Natural killer cell (primary cell): ENCODE measurements at regions of chr14 and their contacts with region 1.

Region 1: GRCh38 chr14:67426983-67427606 is 15.1 kb upstream of the PLEK2 start:
- DNase-seq: peak; percentile 65 to 89
- ATAC-seq: peak; percentile 87 to 99 (median 98)
- H3K4me3 ChIP-seq: no peak overlapping the region
- H3K4me3 Mint-ChIP-seq: no peak overlapping the region
- H3K27ac ChIP-seq: no peak overlapping the region
- H3K27ac Mint-ChIP-seq: no peak overlapping the region
- H3K4me1 ChIP-seq: peaks cover 6% of the 10 kb centered on the region
- H3K4me1 Mint-ChIP-seq: no peaks in the 10 kb centered on the region
- H3K27me3 ChIP-seq: no peaks in the 10 kb centered on the region
- H3K27me3 Mint-ChIP-seq: peaks cover 18 to 19% of the 10 kb centered on the region in 2 donors
- CTCF ChIP-seq: peak; percentile 90

Region 2: GRCh38 chr14:67571272-67571850 is 144.3 kb after region 1 on chr14:
- intact Hi-C with region 1: loop called (anchors 1 kb)
- DNase-seq: peak; percentile 63 to 85
- ATAC-seq: peak; percentile 68 to 97 (median 91)
- H3K4me3 ChIP-seq: no peak overlapping the region
- H3K4me3 Mint-ChIP-seq: no peak overlapping the region
- H3K27ac ChIP-seq: no peak overlapping the region
- H3K27ac Mint-ChIP-seq: no peak overlapping the region
- H3K4me1 ChIP-seq: no peaks in the 10 kb centered on the region
- H3K4me1 Mint-ChIP-seq: peaks cover 11 to 13% of the 10 kb centered on the region in 2 donors
- H3K27me3 ChIP-seq: no peaks in the 10 kb centered on the region
- H3K27me3 Mint-ChIP-seq: peaks cover 0 to 12% of the 10 kb centered on the region in 2 donors
- CTCF ChIP-seq: peak; percentile 79

Region 3: DNA sequence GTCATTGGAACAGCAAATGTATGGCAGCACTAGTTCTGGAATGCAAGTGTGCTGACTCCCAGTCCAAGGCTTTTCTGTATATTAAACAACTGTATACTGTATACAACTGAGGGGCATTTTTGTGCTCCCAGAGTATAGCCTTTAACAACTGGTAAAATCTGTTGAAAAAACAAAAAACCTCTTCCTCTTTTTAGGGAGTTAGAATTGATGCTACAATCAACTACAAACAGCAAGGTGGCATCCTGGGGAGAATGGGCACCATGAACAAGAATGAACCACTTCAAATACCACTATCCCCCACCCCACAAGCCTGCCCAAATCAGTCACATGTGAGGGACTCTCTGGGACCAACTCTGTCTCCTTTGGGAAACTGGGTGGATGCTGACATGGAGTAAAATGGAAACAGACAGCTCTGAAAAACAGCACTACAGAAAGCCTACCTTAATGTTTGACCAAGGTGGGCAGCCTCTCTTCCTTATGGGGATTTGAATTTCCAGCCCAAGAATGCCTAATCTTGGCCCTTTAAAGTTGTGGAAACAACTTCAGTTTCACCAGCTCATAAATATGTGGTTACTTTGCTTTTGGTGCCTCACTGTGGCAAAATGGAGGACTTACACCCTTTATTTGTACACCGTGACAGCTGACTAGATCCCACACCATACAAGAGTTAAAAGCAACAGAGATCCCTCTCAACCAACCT is 239.8 kb after region 1 on chr14:
- intact Hi-C with region 1: loop called (anchors 1 kb)
- DNase-seq: peak in 1 of 2 donors; percentile 78
- ATAC-seq: peak; percentile 59 to 67 (median 65)
- H3K4me3 ChIP-seq: no peak overlapping the region
- H3K4me3 Mint-ChIP-seq: peak overlapping the region; percentile 35
- H3K27ac ChIP-seq: peak overlapping the region; percentile 15
- H3K27ac Mint-ChIP-seq: peak overlapping the region; percentile 85 to 86
- H3K4me1 ChIP-seq: peaks cover 23% of the 10 kb centered on the region
- H3K4me1 Mint-ChIP-seq: peaks cover 68 to 80% of the 10 kb centered on the region in 2 donors
- H3K27me3 ChIP-seq: no peaks in the 10 kb centered on the region
- H3K27me3 Mint-ChIP-seq: no peaks in the 10 kb centered on the region
- CTCF ChIP-seq: peak; percentile 65